ENCODE measurements at regions of chr9 and their contacts with region 1.

Region 1: GRCh38 chr9:114538241-114538640 is 33.0 kb upstream of the WHRN start:
- H3K4me3 ChIP-seq: no peak overlapping the region
- H3K27ac ChIP-seq: no peak overlapping the region
- H3K4me1 ChIP-seq: no peaks in the 10 kb centered on the region
- CTCF ChIP-seq: no peak

Region 2: DNA sequence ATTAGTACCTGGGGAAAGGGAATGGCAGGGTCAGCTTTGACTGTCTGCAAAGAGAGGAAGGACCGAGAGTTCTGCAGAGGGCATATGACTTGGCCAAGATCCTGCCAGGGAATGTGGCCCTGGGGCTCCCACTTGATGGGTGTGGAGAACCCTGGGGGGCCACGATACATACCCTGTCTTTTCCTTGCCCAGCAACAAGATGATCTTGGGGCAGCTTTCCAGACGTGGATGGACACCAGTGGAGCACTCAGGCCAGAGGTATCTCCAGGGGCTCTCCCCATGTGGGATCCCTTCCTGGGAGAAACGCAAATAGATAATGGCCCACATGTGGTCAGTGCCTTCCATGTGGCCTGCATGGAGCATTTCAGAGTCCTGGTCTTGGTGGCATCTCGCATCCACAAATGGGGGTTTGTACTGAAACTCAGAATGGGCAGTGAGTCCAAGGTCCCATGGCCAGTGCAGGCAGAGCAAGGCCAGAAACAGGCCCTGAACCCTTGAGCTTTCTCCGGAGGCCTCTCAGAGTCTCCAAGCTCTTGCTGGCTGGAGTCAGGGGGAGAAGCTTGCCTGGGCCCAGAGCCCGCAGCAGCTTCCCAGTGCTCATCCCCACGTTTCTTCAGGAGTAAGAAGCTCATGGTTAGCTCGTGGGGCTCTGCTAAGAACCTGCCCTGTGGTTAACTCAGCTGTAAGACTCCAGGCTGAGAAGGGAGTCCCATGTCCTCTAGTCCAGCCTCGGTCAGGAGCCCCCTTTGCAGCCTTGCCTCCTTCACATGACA is 233.6 kb before region 1 on chr9:
- CTCF ChIA-PET with region 1: no interaction called
- POLR2A ChIA-PET with region 1: no interaction called
- H3K4me3 ChIP-seq: no peak overlapping the region
- H3K27ac ChIP-seq: no peak overlapping the region
- H3K4me1 ChIP-seq: no peaks in the 10 kb centered on the region; the same call in 1 of the 2 replicates
- CTCF ChIP-seq: no peak

Region 3: DNA sequence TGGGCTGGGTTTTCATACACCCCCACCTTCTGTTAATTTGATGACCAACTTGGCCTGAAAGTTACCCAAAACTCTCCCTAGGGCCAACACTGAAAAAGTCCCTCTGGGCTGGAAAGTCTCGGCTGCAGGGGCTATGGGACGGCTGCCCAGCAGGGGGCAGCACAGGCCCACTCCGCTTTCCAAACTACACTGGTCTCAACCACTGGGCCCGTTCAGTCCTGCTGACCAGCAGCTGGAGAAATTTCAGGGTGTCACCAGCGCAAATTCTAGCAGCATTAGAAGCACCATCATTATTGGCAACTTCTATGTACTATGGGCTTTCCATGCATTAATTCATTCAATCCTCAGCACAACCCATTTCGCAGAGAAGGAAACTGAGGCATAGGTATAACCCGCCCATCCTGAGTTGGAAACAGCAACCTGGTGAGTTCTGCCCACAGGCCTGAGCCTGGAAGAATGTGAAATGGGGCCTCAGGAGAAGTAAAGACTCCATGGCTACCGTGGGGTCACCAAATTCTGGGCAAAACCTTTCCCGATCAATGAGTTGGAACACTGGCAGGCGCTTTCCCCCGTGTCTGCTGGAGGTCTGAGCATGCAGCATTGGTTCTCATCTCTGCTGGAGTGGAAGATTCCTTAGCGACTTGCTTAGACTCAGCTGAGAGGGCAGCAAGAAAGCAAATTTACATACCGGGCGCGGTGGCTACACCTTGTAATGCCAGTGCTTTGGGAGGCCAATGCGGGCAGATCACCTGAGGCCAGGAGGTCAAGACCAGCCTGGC is 198.9 kb before region 1 on chr9:
- CTCF ChIA-PET with region 1: no interaction called
- POLR2A ChIA-PET with region 1: no interaction called
- H3K4me3 ChIP-seq: no peak overlapping the region
- H3K27ac ChIP-seq: no peak overlapping the region
- H3K4me1 ChIP-seq: no peaks in the 10 kb centered on the region
- CTCF ChIP-seq: peak; percentile 49

Region 4: DNA sequence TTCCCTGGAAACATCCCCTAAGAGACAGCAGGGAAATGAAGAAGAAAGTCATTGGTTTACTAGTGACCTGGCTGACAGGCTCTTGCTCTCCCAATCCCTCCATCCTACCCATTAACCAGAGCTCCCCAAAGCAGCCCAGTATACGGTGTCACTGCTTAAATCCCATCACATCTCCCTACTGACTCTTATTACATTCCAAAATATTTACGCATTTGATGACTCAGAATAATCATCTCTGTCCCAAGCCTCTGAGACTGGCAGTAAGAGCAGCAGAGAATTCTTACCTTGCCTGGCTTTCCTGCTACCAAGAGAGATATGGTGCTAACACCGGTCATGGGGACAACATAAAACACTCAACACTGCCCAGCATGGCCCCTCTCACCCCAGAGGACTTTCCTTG is 12.7 kb before region 1 on chr9:
- CTCF ChIA-PET with region 1: interaction called, 15 read pairs
- POLR2A ChIA-PET with region 1: no interaction called
- H3K4me3 ChIP-seq: no peak overlapping the region
- H3K27ac ChIP-seq: no peak overlapping the region
- H3K4me1 ChIP-seq: no peaks in the 10 kb centered on the region
- CTCF ChIP-seq: no peak

Measured in HEK293 (cell line).